Endothelial cell of umbilical vein (primary cell): ENCODE measurements at regions of chr15 and their contacts with region 1.

Region 1: GRCh38 chr15:65212097-65212496 is 824 bp upstream of the CILP start:
- DNase-seq: no peak
- H3K4me3 ChIP-seq: no peak overlapping the region
- H3K27ac ChIP-seq: no peak overlapping the region
- H3K4me1 ChIP-seq: no peaks in the 10 kb centered on the region
- H3K27me3 ChIP-seq: peaks cover 0 to 8% of the 10 kb centered on the region in 2 experiments
- CTCF ChIP-seq: peak; percentile 50 to 52
- POLR2A ChIP-seq: no peak

Region 2: GRCh38 chr15:65201905-65202304 is 10.2 kb before region 1 on chr15:
- CTCF ChIA-PET with region 1: interaction called, 10 read pairs
- POLR2A ChIA-PET with region 1: no interaction called
- dilution Hi-C with region 1: no loop called
- intact Hi-C with region 1: no loop called
- DNase-seq: no peak
- H3K4me3 ChIP-seq: no peak overlapping the region
- H3K27ac ChIP-seq: no peak overlapping the region
- H3K4me1 ChIP-seq: no peaks in the 10 kb centered on the region
- H3K27me3 ChIP-seq: peaks cover 0 to 3% of the 10 kb centered on the region in 2 experiments
- CTCF ChIP-seq: no peak
- POLR2A ChIP-seq: no peak

Region 3: GRCh38 chr15:65249641-65250040 is 37.5 kb after region 1 on chr15:
- CTCF ChIA-PET with region 1: no interaction called
- POLR2A ChIA-PET with region 1: no interaction called
- dilution Hi-C with region 1: no loop called
- intact Hi-C with region 1: no loop called
- DNase-seq: no peak
- H3K4me3 ChIP-seq: no peak overlapping the region
- H3K27ac ChIP-seq: no peak overlapping the region
- H3K4me1 ChIP-seq: no peaks in the 10 kb centered on the region
- H3K27me3 ChIP-seq: no peaks in the 10 kb centered on the region
- CTCF ChIP-seq: no peak
- POLR2A ChIP-seq: no peak

Region 4: GRCh38 chr15:65278401-65278882 is 66.3 kb after region 1 on chr15:
- CTCF ChIA-PET with region 1: no interaction called
- POLR2A ChIA-PET with region 1: no interaction called
- dilution Hi-C with region 1: no loop called
- intact Hi-C with region 1: no loop called
- DNase-seq: no peak
- H3K4me3 ChIP-seq: no peak overlapping the region
- H3K27ac ChIP-seq: no peak overlapping the region
- H3K4me1 ChIP-seq: no peaks in the 10 kb centered on the region
- H3K27me3 ChIP-seq: no peaks in the 10 kb centered on the region
- CTCF ChIP-seq: no peak
- POLR2A ChIP-seq: no peak

Region 5: DNA sequence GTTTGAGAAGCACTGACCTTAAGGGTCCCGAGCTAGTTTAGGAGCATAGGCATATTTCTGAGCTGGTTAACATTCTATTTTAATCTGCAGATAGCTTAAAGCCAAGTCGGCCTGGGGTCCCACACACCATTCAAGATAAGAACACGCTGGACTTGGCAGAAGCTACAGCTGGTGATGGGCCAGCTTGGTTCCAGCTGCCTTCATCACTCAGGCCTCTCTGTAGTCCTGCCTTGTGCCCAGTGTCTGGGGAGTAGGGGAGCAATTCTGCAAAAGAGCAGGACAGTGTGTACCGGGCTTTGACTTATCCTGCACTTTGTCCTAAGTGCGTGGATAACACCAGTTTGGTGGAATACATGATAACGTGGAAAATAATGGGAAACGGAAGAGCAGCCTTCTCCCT is 877.0 kb after region 1 on chr15:
- CTCF ChIA-PET with region 1: no interaction called
- POLR2A ChIA-PET with region 1: no interaction called
- dilution Hi-C with region 1: no loop called
- intact Hi-C with region 1: no loop called
- DNase-seq: no peak
- H3K4me3 ChIP-seq: no peak overlapping the region
- H3K27ac ChIP-seq: no peak overlapping the region
- H3K4me1 ChIP-seq: no peaks in the 10 kb centered on the region
- H3K27me3 ChIP-seq: peaks cover 0 to 3% of the 10 kb centered on the region in 2 experiments
- CTCF ChIP-seq: no peak
- POLR2A ChIP-seq: no peak